ENCODE measurements at regions of chr7 and their contacts with region 1.

Region 1: GRCh38 chr7:129480674-129481365 is 21.5 kb upstream of the SMKR1 start:
- DNase-seq: no peak
- ATAC-seq: no peak
- H3K4me3 ChIP-seq: no peak overlapping the region
- H3K27ac ChIP-seq: no peak overlapping the region
- H3K4me1 ChIP-seq: no peaks in the 10 kb centered on the region
- H3K27me3 ChIP-seq: no peaks in the 10 kb centered on the region
- CTCF ChIP-seq: no peak

Region 2: GRCh38 chr7:129278688-129279087 is 202.1 kb before region 1 on chr7:
- CTCF ChIA-PET with region 1: no interaction called
- POLR2A ChIA-PET with region 1: interaction called, 13 read pairs
- intact Hi-C with region 1: no loop called
- DNase-seq: no peak
- ATAC-seq: no peak
- H3K4me3 ChIP-seq: no peak overlapping the region
- H3K27ac ChIP-seq: no peak overlapping the region
- H3K4me1 ChIP-seq: peaks cover 14% of the 10 kb centered on the region
- H3K27me3 ChIP-seq: no peaks in the 10 kb centered on the region
- CTCF ChIP-seq: no peak

Region 3: DNA sequence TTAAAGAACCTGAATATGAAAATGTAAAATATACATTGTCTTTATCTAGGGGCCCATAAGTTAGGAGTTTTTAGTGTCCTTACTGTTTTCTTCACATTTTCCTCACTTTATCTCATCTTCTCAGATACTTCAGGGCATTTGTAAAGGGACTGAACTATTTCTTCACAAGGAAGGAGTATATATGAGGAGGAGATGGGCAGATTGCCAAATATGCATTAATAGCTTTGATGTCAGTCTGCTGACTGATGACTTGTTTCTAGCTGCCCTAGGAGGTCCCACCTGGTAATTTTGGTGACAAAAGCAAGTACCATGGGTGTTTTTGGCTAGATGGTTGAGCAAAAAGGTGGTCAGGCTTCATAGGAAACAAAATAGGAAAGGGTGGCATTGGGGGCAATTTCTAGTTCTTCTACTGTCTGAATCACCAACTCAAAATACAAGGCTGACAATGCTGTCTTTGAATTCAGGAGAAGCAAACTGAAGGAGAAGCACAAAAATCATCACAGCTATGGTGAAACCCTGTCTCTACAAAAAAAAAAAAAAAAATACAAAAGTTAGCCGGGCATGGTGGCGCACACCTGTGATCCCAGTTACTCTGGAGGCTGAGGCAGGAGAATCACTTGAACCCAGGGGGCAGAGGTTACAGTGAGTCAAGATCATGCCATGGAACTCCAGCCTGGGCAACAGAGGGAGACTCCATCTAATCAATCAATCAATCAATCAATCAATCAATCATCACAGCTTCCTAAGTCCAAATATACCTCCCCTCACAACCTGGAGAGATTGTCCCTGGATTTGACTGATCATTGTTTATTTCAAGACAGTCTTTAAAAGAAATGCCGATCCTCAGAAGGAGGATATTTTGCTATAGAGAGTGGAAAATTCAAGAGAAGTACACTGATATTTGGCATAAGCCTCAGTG is 56.9 kb before region 1 on chr7:
- CTCF ChIA-PET with region 1: no interaction called
- POLR2A ChIA-PET with region 1: no interaction called
- intact Hi-C with region 1: no loop called
- DNase-seq: peak; percentile 53
- ATAC-seq: no peak
- H3K4me3 ChIP-seq: no peak overlapping the region
- H3K27ac ChIP-seq: no peak overlapping the region
- H3K4me1 ChIP-seq: no peaks in the 10 kb centered on the region
- H3K27me3 ChIP-seq: no peaks in the 10 kb centered on the region
- CTCF ChIP-seq: no peak

Region 4: DNA sequence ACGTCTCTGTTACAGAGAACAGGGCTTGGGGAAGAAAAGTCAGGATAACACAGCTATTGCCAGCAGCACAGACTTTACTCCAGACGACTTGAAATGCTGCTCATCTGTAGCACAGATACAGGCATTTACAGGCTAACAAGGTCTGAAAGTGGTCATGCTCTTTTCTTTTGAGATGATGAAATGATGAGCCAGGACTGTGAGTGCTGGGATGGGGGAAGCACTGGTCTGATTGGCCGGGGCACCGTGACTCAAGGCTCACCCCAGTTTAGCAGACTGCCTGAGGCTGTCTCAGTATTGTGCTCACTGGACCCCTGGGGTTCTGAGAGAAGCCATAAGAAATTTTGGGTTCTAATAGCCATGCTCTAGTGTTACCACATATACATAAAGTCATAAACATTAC is 33.9 kb after region 1 on chr7:
- CTCF ChIA-PET with region 1: no interaction called
- POLR2A ChIA-PET with region 1: no interaction called
- intact Hi-C with region 1: no loop called
- DNase-seq: no peak
- ATAC-seq: no peak
- H3K4me3 ChIP-seq: no peak overlapping the region
- H3K27ac ChIP-seq: no peak overlapping the region
- H3K4me1 ChIP-seq: no peaks in the 10 kb centered on the region
- H3K27me3 ChIP-seq: no peaks in the 10 kb centered on the region
- CTCF ChIP-seq: no peak